ENCODE measurements at regions of chr9 and their contacts with region 1.

Region 1: DNA sequence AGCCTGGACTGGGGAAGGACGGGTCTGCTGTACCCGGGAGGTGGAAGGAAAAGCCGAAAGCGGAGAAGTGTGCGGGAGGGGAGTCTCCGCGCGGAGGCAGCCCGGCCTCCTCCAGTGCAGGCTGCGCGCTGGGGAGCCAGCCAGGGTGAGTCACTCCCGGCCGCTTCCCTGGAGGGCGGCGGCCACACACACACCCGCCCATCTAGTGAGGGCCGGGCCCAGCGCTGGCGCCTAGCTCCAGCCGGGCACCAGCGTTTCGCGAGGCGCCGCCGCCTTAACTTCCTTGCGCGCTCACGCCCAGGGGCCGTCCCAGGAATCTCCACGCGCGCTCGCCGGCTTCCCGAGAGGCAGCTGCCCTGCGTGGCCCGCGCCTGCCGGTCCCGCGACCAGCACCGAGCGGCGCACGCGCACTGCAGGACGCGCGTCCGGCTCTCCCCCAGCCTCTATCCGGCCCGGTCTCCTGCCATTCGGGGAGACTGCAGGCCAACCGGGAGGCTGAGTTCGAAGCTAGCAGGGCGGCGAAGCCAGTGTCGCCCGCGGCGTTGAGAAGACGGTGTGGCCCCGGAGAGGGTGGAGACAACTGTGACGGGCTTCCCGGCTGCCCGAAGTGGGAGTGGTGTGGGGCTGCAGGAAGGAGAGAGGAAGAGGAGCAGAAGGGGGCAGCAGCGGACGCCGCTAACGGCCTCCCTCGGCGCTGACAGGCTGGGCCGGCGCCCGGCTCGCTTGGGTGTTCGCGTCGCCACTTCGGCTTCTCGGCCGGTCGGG is at the start of gene JAK2:
- DNase-seq: peak; percentile 97
- ATAC-seq: peak; percentile 95
- total RNA-seq, gene JAK2: 17.6 TPM

Region 2: GRCh38 chr9:4679268-4680172 is 305.3 kb before region 1 on chr9 and contains the start of gene CDC37L1:
- intact Hi-C with region 1: loop called (anchors 10 kb)
- DNase-seq: peak; percentile 99
- ATAC-seq: peak; percentile 99
- total RNA-seq, gene CDC37L1: 42.1 TPM

Region 3: GRCh38 chr9:4762108-4762885 is 222.5 kb before region 1 on chr9:
- intact Hi-C with region 1: loop called (anchors 2 kb)
- DNase-seq: no peak
- ATAC-seq: peak; percentile 45

Region 4: DNA sequence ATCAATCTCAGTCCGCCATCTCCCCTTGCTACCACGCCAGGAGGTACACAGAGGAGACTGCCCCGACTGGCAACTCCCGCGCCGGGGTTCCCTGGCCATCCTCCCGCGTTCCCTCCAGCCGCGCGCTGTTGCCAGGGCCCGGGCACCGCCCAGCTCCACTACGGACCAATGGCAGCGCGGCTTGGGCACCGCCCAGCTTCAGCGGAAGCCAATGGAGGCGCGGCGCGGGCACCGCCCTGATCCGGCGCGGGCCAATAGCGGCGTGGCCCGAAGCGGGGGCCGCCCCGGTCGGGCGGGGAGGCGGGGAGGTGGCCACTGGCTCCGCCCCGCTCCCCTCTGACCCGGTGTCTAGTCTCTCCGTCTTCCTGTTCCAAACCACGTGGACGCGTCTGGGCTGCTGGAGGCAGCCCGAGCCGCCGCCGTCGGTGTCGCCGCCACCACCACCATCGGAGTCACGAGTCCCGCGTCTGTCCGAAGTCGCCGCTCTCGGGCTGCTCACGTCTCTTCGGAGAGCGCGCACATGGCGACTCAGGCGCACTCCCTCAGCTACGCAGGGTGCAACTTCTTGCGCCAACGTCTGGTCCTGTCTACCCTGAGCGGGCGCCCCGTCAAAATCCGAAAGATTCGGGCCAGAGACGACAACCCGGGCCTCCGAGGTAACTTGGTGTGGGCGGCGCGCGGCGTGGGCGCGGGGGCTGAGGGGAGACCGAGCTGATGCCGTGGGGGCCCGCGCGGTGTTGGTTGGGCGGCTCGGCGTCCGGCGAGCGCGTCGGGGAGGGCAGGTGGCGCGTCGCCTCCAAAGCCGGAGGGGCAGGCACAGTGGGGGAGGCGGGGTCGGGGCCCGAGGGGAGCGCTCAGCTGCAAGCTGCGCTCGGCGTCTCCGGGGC is 192.0 kb before region 1 on chr9 and contains the start of gene RCL1:
- intact Hi-C with region 1: loop called (anchors 2 kb)
- DNase-seq: peak; percentile 98
- ATAC-seq: peak; percentile 99
- total RNA-seq, gene RCL1: 5.0 TPM

Region 5: GRCh38 chr9:5593904-5594303 is 609.1 kb after region 1 on chr9:
- intact Hi-C with region 1: loop called (anchors 10 kb)
- DNase-seq: no peak
- ATAC-seq: no peak